ENCODE measurements at regions of chr19 and their contacts with region 1.

Region 1: GRCh38 chr19:44212250-44212865 is at the start of gene ZNF227:
- DNase-seq: peak; percentile 97
- H3K4me3 ChIP-seq: peak within 1 kb of the TSS; percentile 82 to 99 (median 98)
- H3K27ac ChIP-seq: peak within 1 kb of the TSS; percentile 71
- H3K4me1 ChIP-seq: peaks cover 11% of the 10 kb centered on the region
- H3K27me3 ChIP-seq: no peaks in the 10 kb centered on the region
- CTCF ChIP-seq: no peak
- POLR2A ChIP-seq: peak; percentile 65
- total RNA-seq, gene ZNF227: 17.2 and 17.8 TPM in 2 replicates

Region 2: DNA sequence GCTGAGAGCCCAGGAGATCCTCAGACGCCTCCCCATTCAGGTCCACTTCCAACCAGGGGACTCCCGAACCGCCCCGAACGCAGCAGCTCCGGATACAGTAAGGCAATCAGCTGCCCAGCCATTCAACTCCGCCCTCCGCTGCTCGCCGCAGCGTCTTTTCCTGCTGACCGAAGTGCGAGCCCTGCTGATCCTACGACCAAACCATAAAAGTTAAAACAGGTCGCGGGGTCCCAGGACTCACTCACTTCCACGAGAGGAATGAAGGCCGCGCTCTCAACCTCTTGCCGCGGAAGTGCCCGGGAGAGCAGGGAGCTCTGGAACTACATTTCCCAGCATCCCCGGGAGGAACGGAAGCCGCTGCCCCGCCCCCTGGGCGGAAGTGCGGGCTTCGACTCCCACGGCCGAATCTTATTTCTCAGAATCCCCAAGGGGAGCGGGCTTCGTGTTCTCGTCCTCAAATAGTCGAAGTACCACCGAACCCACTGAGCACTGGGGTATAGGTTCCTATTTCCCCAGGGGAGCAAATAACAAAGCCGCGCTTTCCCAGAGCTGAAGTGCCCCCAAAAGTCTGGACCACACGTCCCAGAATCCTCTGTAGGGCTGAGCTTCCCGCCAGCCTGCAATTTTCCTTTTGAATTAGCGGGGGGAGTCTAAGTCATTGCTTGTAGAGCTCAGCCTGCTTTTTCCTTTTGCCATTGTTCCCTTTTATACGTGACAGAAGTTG is 277.2 kb before region 1 on chr19 and contains the start of gene ZNF45:
- CTCF ChIA-PET with region 1: interaction called, 3 read pairs
- POLR2A ChIA-PET with region 1: no interaction called
- dilution Hi-C with region 1: no loop called
- intact Hi-C with region 1: loop called (anchors 5 kb)
- DNase-seq: peak; percentile 93
- H3K4me3 ChIP-seq: peak within 1 kb of the TSS; percentile 43 to 94 (median 71)
- H3K27ac ChIP-seq: peak within 1 kb of the TSS; percentile 26
- H3K4me1 ChIP-seq: peaks cover 13% of the 10 kb centered on the region
- H3K27me3 ChIP-seq: no peaks in the 10 kb centered on the region
- CTCF ChIP-seq: no peak
- POLR2A ChIP-seq: peak; percentile 53
- total RNA-seq, gene ZNF45: 10.8 and 11.2 TPM in 2 replicates

Region 3: DNA sequence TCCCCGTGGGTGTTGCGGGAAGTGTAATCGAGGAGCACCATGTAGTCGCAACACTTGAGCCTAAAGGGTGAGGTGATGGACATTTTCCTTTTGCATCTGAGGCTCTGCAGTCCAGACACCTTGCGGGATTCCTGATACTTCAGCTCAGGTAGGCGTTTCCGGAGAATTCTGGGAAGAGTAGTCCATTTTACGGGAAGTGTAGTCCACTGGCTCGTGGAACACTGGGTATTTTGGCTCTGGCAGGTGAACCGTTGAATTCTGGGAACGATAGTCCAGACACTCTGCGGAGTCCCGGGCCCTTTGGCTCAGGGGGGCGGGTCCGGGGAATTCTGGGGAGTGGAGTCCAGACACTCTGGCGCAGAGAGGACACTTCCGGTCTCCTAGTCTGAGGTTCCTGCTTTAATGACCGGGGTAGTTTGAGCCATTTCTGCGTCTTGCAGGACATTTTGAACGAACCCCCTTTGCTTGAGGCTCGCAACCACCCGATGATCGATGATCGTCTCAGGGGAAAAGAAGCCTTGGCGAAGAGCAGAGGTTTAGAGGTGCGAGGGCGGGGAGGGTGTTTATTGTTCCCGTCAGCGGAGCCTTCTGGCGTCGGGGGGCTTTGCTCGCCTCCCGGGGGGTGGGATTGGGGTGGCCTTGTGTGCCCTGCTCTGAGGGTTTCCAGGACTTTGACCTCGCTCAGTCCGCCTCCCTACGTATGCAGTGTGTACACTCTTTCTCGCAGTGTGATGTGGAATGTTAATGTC is 160.5 kb before region 1 on chr19 and contains the start of gene ZNF223:
- CTCF ChIA-PET with region 1: interaction called, 3 read pairs
- POLR2A ChIA-PET with region 1: no interaction called
- dilution Hi-C with region 1: no loop called
- intact Hi-C with region 1: loop called (anchors 1 kb)
- DNase-seq: peak; percentile 91
- H3K4me3 ChIP-seq: peak within 1 kb of the TSS; percentile 48 to 64 (median 61)
- H3K27ac ChIP-seq: no peak within 1 kb of the TSS
- H3K4me1 ChIP-seq: peaks cover 11% of the 10 kb centered on the region
- H3K27me3 ChIP-seq: peaks cover 4 to 9% of the 10 kb centered on the region in 2 experiments
- CTCF ChIP-seq: no peak
- POLR2A ChIP-seq: peak; percentile 53
- total RNA-seq, gene ZNF223: 3.4 and 3.7 TPM in 2 replicates

Region 4: GRCh38 chr19:44228318-44228717 is 16.0 kb after region 1 on chr19:
- CTCF ChIA-PET with region 1: no interaction called
- POLR2A ChIA-PET with region 1: no interaction called
- dilution Hi-C with region 1: no loop called
- intact Hi-C with region 1: no loop called
- DNase-seq: no peak
- H3K4me3 ChIP-seq: no peak overlapping the region
- H3K27ac ChIP-seq: no peak overlapping the region
- H3K4me1 ChIP-seq: no peaks in the 10 kb centered on the region
- H3K27me3 ChIP-seq: no peaks in the 10 kb centered on the region
- CTCF ChIP-seq: no peak
- POLR2A ChIP-seq: no peak

Region 5: DNA sequence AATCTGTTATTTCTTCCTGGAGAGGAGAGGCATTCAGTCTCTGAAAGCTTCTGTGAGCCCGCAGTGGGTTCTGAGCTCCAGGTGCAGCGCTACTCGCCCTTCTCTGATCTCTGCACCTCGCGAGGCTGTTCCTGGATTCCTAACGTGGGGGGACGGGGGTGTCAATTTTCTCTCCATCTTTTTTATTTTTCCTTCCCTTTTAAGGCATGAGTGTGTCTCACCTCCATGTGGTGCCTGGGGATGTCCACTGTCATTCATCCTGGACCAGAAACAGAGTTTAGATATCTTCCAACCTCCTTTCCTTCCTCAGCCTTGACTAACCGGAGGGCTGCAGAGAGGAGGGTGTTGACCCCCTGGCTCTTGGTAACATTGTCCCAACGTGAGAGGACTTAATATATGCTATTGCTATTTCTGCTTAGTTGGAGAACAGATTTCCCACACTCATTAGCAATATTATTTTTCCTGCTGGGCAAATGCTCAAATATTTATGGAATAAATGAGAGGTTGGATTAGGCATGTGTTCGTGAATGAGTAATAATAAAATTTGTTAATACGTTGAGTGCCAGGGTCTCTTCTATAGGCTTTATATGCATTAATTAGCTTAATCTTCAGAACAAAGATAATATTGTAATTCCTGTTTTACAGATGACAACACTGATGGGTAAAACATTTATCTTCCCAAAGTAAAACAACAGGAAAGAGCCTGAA is 48.2 kb after region 1 on chr19:
- CTCF ChIA-PET with region 1: no interaction called
- POLR2A ChIA-PET with region 1: interaction called, 5 read pairs
- dilution Hi-C with region 1: no loop called
- intact Hi-C with region 1: loop called (anchors 2 kb)
- DNase-seq: no peak
- H3K4me3 ChIP-seq: peak overlapping the region in 2 of 3 experiments; percentile 44 to 48
- H3K27ac ChIP-seq: no peak overlapping the region
- H3K4me1 ChIP-seq: no peaks in the 10 kb centered on the region
- H3K27me3 ChIP-seq: no peaks in the 10 kb centered on the region
- CTCF ChIP-seq: no peak
- POLR2A ChIP-seq: no peak

Region 6: GRCh38 chr19:44356383-44357111 is 144.2 kb after region 1 on chr19 and contains the start of gene ZNF112:
- CTCF ChIA-PET with region 1: no interaction called
- POLR2A ChIA-PET with region 1: no interaction called
- dilution Hi-C with region 1: no loop called
- intact Hi-C with region 1: loop called (anchors 2 kb)
- DNase-seq: peak; percentile 93
- H3K4me3 ChIP-seq: peak within 1 kb of the TSS; percentile 41 to 60 (median 58)
- H3K27ac ChIP-seq: no peak within 1 kb of the TSS
- H3K4me1 ChIP-seq: peaks cover 4% of the 10 kb centered on the region
- H3K27me3 ChIP-seq: no peaks in the 10 kb centered on the region
- CTCF ChIP-seq: no peak
- POLR2A ChIP-seq: peak; percentile 56
- total RNA-seq, gene ZNF112: 4.6 and 7.5 TPM in 2 replicates

Region 7: GRCh38 chr19:44500148-44500956 is 288.0 kb after region 1 on chr19 and contains the start of gene ZNF180:
- CTCF ChIA-PET with region 1: interaction called, 3 read pairs
- POLR2A ChIA-PET with region 1: no interaction called
- dilution Hi-C with region 1: no loop called
- intact Hi-C with region 1: loop called (anchors 2 kb)
- DNase-seq: peak; percentile 96
- H3K4me3 ChIP-seq: peak within 1 kb of the TSS; percentile 75 to 88 (median 77)
- H3K27ac ChIP-seq: peak within 1 kb of the TSS; percentile 59
- H3K4me1 ChIP-seq: peaks cover 11% of the 10 kb centered on the region
- H3K27me3 ChIP-seq: peaks cover 0 to 2% of the 10 kb centered on the region in 2 experiments
- CTCF ChIP-seq: peak; percentile 14 to 53
- POLR2A ChIP-seq: peak; percentile 77
- total RNA-seq, gene ZNF180: 8.6 and 8.9 TPM in 2 replicates